T-cell (primary cell): ENCODE measurements at regions of chr5 and their contacts with region 1.

Region 1: DNA sequence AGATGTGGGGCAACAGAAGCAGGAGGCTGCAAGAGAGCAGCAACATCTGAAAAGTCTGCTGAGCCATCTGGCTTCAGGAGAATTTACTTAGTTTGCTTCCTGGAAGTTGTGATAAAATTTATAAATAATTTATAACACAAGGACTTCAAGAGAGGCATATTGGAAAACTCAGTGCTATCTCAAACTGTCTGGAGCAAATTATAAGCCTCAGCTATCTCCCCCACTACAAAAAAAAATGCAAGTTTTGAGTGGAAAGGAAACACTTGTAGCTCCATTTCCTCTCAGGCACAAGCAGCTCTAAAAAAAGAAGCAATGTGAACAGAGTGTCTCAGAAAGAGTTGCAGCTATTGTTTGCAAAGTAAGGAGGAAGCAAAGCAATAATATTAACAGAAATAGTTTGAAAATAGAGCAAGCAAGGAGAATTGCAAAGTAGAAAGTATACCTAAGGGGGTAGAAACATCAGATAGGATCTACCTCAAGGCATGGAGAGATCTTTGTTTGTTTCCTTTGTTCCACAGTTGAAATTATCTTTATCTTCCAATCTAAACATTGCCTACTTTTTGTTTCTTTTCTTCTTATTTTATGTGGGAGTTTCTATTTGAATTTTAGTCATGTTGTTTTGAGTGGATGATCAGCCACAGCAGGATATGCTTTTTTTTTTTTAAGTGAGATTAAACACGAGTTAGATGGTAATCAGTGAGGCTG is 55.9 kb upstream of the IL6ST start:
- DNase-seq: peak in 1 of 35 experiments; percentile 44
- ATAC-seq: peak; percentile 63 to 82 (median 75)
- H3K4me3 ChIP-seq: peak overlapping the region in 1 of 2 donors; percentile 49
- H3K4me3 Mint-ChIP-seq: peak overlapping the region; percentile 54 to 69 (median 62)
- H3K27ac ChIP-seq: peak overlapping the region; percentile 58
- H3K27ac Mint-ChIP-seq: peak overlapping the region; percentile 95 to 96
- H3K4me1 ChIP-seq: peaks cover 46 to 61% of the 10 kb centered on the region in 2 experiments
- H3K4me1 Mint-ChIP-seq: peaks cover 63 to 75% (median 67%) of the 10 kb centered on the region in 3 donors
- H3K27me3 ChIP-seq: no peaks in the 10 kb centered on the region
- H3K27me3 Mint-ChIP-seq: no peaks in the 10 kb centered on the region

Region 2: DNA sequence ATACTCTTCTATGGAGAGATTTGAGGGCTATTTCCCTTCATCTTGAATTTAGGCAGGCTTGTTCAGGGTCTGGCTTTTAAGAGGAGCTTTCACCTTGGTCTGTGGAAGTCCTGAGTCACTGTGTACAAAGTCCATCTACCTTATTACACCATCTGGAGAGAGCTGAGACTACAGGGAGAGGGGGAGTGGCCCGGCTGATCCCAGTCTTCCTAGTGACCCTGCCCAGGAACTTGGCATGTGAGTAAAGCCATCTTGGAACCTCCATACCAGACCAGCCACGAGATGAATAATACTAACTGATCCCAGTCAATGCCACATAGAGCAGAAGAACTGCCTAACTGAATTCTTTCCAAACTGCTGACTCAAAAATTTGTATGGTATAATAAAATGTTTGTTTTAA is 47.5 kb before region 1 on chr5:
- CTCF ChIA-PET with region 1: interaction called in 1 of 2 experiments, 11 read pairs
- POLR2A ChIA-PET with region 1: interaction called in 1 of 2 experiments, 3 read pairs
- DNase-seq: no peak
- ATAC-seq: no peak
- H3K4me3 ChIP-seq: no peak overlapping the region
- H3K4me3 Mint-ChIP-seq: no peak overlapping the region
- H3K27ac ChIP-seq: no peak overlapping the region
- H3K27ac Mint-ChIP-seq: no peak overlapping the region
- H3K4me1 ChIP-seq: peaks cover 10 to 15% of the 10 kb centered on the region in 2 experiments
- H3K4me1 Mint-ChIP-seq: peaks cover 22 to 31% (median 25%) of the 10 kb centered on the region in 3 donors
- H3K27me3 ChIP-seq: no peaks in the 10 kb centered on the region
- H3K27me3 Mint-ChIP-seq: no peaks in the 10 kb centered on the region

Region 3: GRCh38 chr5:56123531-56124243 is 73.0 kb after region 1 on chr5:
- CTCF ChIA-PET with region 1: no interaction called
- POLR2A ChIA-PET with region 1: no interaction called
- DNase-seq: no peak
- ATAC-seq: no peak
- H3K4me3 ChIP-seq: no peak overlapping the region
- H3K4me3 Mint-ChIP-seq: no peak overlapping the region
- H3K27ac ChIP-seq: no peak overlapping the region
- H3K27ac Mint-ChIP-seq: peak overlapping the region; percentile 37 to 80
- H3K4me1 ChIP-seq: peaks cover 24% of the 10 kb centered on the region in 2 experiments
- H3K4me1 Mint-ChIP-seq: peaks cover 37 to 43% (median 38%) of the 10 kb centered on the region in 3 donors
- H3K27me3 ChIP-seq: peaks cover 0 to 3% of the 10 kb centered on the region in 2 experiments
- H3K27me3 Mint-ChIP-seq: no peaks in the 10 kb centered on the region

Region 4: GRCh38 chr5:56175488-56175887 is 124.8 kb after region 1 on chr5:
- CTCF ChIA-PET with region 1: no interaction called
- POLR2A ChIA-PET with region 1: no interaction called
- DNase-seq: no peak
- ATAC-seq: no peak
- H3K4me3 ChIP-seq: no peak overlapping the region
- H3K4me3 Mint-ChIP-seq: no peak overlapping the region
- H3K27ac ChIP-seq: no peak overlapping the region
- H3K27ac Mint-ChIP-seq: no peak overlapping the region
- H3K4me1 ChIP-seq: peaks cover 0 to 7% of the 10 kb centered on the region in 2 experiments
- H3K4me1 Mint-ChIP-seq: peaks cover 10 to 21% (median 14%) of the 10 kb centered on the region in 3 donors
- H3K27me3 ChIP-seq: no peaks in the 10 kb centered on the region
- H3K27me3 Mint-ChIP-seq: no peaks in the 10 kb centered on the region

Region 5: GRCh38 chr5:56190497-56190896 is 139.8 kb after region 1 on chr5:
- CTCF ChIA-PET with region 1: no interaction called
- POLR2A ChIA-PET with region 1: interaction called in 1 of 2 experiments, 10 read pairs
- DNase-seq: peak in 34 of 35 experiments; percentile 3 to 69 (median 47)
- ATAC-seq: peak; percentile 61 to 88 (median 76)
- H3K4me3 ChIP-seq: no peak overlapping the region
- H3K4me3 Mint-ChIP-seq: no peak overlapping the region
- H3K27ac ChIP-seq: no peak overlapping the region
- H3K27ac Mint-ChIP-seq: peak overlapping the region; percentile 0 to 39
- H3K4me1 ChIP-seq: peaks cover 0 to 3% of the 10 kb centered on the region in 2 experiments
- H3K4me1 Mint-ChIP-seq: peaks cover 15 to 24% (median 21%) of the 10 kb centered on the region in 3 donors
- H3K27me3 ChIP-seq: no peaks in the 10 kb centered on the region
- H3K27me3 Mint-ChIP-seq: no peaks in the 10 kb centered on the region